OCI-LY7 (cell line): ENCODE measurements at regions of chr3 and their contacts with region 1.

Region 1: GRCh38 chr3:160941885-160942494 is 163.2 kb downstream of the B3GALNT1 start:
- DNase-seq: peak; percentile 64
- H3K4me3 ChIP-seq: no peak overlapping the region
- H3K27ac ChIP-seq: no peak overlapping the region
- H3K4me1 ChIP-seq: no peaks in the 10 kb centered on the region
- CTCF ChIP-seq: peak; percentile 90

Region 2: DNA sequence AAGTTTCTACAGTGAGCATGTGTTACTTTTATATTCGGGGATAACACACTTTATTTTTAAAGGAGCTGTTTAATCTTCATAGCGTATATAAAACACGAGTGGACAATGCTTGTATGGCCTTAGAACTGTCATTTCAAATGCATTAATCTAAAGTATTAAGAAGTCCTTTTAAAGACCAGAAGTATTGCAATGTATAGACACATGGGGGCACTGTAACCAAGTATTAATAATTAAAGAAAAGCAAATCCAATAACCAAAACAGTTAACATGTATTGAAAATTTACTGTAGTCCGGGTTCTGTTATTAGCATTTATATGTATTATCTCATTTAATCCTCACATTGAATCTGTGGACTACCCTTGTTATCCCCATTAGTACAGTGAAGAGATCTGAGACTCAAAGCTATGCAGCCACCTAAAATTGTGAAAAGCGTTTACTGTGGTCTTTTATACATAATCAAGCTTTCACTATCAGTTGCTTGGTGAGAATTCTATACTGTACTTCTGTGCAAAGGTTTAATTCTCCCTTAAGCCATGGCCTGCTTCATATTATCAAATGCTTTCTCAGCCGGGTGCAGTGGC is 254.9 kb before region 1 on chr3:
- CTCF ChIA-PET with region 1: no interaction called
- POLR2A ChIA-PET with region 1: no interaction called
- intact Hi-C with region 1: loop called (anchors 1 kb)
- DNase-seq: peak; percentile 21
- H3K4me3 ChIP-seq: no peak overlapping the region
- H3K27ac ChIP-seq: no peak overlapping the region
- H3K4me1 ChIP-seq: no peaks in the 10 kb centered on the region
- CTCF ChIP-seq: peak; percentile 82

Region 3: GRCh38 chr3:160707187-160707794 is 234.7 kb before region 1 on chr3:
- CTCF ChIA-PET with region 1: no interaction called
- POLR2A ChIA-PET with region 1: no interaction called
- intact Hi-C with region 1: loop called (anchors 1 kb)
- DNase-seq: peak; percentile 58
- H3K4me3 ChIP-seq: no peak overlapping the region
- H3K27ac ChIP-seq: no peak overlapping the region
- H3K4me1 ChIP-seq: no peaks in the 10 kb centered on the region
- CTCF ChIP-seq: peak; percentile 77

Region 4: DNA sequence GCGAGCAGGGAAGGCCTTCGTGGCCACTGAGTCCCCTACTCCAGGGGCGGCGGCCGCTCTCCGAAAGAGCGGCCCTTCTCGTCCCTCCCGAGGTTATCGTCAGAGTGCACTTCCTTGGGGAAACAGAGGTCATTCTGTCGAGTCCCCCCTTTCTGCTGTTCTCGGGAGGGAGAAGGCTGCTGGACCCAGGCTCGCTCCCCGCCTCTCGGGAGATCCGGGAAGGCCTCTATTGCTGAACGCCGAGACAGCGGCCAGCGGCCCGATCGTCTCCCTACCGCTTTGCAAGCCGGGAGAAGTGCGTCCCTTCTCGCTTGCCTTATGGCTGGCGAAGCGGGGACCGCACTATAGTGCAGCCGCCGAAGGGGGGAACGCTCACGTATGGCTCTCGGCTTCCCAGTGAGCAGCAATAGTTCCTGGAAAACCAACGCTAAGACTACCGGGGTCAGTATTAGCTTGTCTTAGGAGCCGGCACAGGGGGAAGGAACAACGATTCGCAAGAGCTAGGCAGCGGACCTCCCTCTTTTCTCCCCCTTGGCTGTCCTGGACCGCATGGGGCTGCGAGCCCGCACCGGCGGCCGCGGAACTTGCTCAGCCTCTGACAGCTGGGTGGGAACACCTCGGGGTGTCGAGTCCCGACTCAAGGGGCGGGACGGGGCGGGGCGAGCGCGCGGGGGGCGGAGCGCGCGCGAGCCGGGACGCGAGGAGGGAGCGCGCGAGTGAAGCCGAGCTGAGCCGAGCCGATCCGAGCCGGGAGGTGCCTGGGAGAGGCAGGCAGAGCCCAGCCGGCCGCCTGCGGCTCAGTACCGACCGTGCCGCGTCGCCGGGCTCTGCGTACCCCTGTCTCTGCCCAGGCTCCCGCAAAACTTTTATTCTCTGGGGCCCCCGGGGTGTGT is 186.9 kb before region 1 on chr3:
- CTCF ChIA-PET with region 1: no interaction called
- POLR2A ChIA-PET with region 1: interaction called, 4 read pairs
- intact Hi-C with region 1: loop called (anchors 5 kb)
- DNase-seq: peak; percentile 95
- H3K4me3 ChIP-seq: peak overlapping the region; percentile 84
- H3K27ac ChIP-seq: peak overlapping the region; percentile 69
- H3K4me1 ChIP-seq: peaks cover 26% of the 10 kb centered on the region
- CTCF ChIP-seq: no peak

Region 5: DNA sequence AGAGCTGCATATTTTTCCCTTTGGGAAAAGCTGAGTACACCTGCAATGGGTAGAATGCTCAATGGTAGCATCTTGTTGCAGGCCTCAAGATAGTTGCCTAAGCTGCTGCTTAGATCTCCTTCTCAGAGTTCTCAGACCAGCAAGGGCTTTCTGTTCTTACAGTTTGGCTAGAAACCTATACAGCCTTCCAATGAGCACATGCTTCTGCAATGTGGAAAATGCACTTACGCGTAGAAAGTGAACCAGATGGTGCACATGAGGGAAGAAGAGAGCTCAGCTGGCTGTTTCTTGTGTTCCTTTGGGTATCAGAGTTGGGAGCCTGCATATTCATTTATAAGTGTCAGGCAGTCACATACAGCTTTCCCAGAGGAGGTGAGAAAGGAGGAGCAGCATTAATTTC is 26.8 kb after region 1 on chr3:
- CTCF ChIA-PET with region 1: no interaction called
- POLR2A ChIA-PET with region 1: no interaction called
- intact Hi-C with region 1: loop called (anchors 1 kb)
- DNase-seq: no peak
- H3K4me3 ChIP-seq: no peak overlapping the region
- H3K27ac ChIP-seq: no peak overlapping the region
- H3K4me1 ChIP-seq: peaks cover 10% of the 10 kb centered on the region
- CTCF ChIP-seq: no peak

Region 6: DNA sequence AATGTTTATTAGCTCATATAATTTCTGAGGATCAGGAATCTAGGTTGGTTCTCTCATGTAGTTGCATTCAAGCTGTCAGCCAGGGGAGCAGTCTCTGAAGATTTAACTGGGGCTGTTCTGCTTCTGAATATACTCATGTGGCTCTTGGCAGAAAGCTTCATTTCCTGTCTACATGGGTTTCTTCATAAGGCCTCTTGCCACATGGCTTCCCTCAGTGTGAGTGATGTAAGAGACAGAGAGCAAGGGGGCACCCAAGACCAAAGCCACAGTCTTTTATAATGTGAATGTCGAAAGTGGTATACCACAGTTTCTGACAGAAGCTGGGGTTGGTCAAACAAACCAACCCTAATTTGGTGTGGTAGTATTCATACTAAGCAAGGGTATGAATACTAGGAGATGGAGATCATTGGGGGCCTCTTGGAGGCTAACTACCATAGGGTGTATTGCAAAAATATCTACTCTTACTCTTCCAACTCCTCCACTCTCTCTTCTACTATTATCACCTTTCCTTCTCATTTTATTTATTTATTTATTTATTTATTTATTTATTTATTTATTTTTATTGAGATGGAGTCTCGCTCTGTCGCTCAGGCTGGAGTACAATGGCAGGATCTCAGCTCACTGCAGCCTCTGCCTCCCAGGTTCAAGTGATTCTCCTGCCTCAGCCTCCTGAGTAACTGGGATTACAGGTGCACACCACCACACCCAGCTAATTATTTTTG is 39.4 kb after region 1 on chr3:
- CTCF ChIA-PET with region 1: no interaction called
- POLR2A ChIA-PET with region 1: no interaction called
- intact Hi-C with region 1: no loop called
- DNase-seq: peak; percentile 32
- H3K4me3 ChIP-seq: no peak overlapping the region
- H3K27ac ChIP-seq: no peak overlapping the region
- H3K4me1 ChIP-seq: peaks cover 12% of the 10 kb centered on the region
- CTCF ChIP-seq: no peak

Region 7: DNA sequence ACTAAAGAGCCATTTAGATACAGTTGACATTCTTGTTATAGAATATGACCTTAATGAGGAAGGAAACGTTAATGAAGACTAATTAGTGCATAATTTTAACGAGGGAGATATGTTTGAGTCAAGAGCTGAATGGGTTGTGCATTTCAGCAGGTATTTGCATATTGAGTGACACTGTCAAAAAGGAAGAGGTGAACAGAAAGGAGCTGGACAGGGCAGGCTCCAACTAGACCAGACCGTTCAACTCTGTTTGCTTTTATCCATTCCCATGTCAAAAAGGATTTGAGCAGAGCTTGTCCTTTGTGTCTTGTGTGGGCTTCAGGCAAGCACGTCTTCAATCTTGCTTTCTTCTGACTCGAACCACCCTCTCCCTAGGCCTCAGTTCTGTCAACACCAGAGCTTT is 122.4 kb after region 1 on chr3:
- CTCF ChIA-PET with region 1: no interaction called
- POLR2A ChIA-PET with region 1: no interaction called
- intact Hi-C with region 1: no loop called
- DNase-seq: no peak
- H3K4me3 ChIP-seq: no peak overlapping the region
- H3K27ac ChIP-seq: no peak overlapping the region
- H3K4me1 ChIP-seq: peaks cover 58% of the 10 kb centered on the region
- CTCF ChIP-seq: no peak

Region 8: DNA sequence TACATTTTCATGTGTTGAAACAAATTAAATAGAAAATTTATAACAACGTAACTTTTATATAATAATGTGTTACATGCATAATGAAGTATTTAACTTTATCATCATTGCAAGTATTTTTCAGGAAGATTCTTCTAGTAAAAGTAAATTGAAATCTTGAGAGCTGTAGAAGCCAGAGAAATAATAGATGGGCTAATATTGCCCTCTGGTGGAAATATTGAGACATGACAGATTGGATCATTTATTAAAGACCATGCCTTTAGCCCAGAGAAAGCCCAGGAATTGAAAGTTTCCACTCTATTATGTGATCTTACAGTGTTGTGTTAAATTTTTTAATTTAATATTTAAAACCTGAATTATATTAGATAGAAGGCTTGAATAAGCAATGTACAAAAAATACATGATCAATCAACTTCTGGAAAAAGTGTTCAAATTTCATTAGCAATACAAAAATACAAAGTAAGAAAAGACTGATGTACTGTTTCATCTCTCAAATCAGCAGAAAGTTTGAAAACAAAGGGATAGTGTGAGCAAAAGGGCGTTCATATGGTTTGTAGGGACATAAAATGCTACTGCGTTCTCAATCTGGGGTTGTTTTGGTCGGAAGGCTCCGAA is 482.0 kb after region 1 on chr3:
- CTCF ChIA-PET with region 1: no interaction called
- POLR2A ChIA-PET with region 1: no interaction called
- intact Hi-C with region 1: loop called (anchors 10 kb)
- DNase-seq: peak; percentile 38
- H3K4me3 ChIP-seq: no peak overlapping the region
- H3K27ac ChIP-seq: no peak overlapping the region
- H3K4me1 ChIP-seq: no peaks in the 10 kb centered on the region
- CTCF ChIP-seq: peak; percentile 89